ENCODE measurements at regions of chr7 and their contacts with region 1.

Region 1: DNA sequence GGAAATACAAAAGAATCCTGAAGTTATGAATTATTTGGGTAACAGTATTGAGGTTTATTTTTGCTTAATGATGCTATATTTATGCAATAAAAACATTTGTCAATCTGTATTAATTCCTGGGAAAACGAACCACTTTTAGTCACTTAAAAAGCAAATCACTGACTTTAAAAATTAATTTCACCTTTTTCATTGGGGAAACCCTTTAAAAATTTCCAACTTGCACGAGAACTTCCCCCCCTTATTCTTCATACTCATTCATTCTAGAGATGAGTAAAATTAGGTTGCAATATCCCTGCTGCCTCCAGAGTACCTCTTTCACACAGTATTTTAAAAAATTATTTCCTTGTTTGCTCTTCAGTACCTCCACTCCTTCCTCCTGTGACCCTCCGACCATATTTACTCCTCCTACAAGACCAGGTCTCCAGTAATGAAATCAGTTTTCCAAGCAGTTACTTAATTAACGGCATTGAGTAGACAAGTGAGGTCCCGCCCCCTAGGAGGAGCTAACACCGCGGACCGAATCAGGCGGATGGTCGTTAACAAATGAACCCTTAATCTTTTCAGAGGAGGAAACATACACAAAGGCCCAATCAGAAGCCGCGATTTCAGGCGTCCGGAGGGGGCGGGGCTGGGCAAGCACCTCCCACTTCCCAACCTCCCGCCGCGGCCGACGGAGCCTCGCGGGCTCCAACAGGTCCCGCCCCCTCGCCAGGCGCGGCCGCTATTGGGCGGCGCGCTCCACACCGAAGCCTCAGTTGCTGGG is 465 bp upstream of the TRIM24 start:
- DNase-seq: peak; percentile 98
- H3K4me3 Mint-ChIP-seq: peak overlapping the region; percentile 83
- H3K27ac Mint-ChIP-seq: peak overlapping the region; percentile 82
- H3K4me1 Mint-ChIP-seq: peaks cover 15% of the 10 kb centered on the region
- H3K27me3 Mint-ChIP-seq: no peaks in the 10 kb centered on the region
- CTCF ChIP-seq: no peak

Region 2: DNA sequence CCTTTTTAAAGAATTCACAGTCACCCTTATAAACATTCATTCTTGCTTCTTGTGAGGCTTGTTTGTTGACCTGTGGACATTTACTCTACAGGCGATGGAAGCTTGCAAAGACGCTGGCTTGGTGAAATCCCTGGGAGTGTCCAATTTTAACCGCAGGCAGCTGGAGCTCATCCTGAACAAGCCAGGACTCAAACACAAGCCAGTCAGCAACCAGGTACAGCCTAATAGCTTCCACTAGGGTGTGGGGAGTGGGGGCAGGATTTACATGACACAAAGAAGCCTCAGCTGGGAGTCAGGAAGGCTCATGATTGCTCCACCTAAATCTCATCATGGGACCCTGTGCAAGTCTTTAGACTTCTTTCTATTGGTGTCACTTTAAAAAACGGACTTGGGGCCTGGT is 354.4 kb before region 1 on chr7:
- CTCF ChIA-PET with region 1: no interaction called
- intact Hi-C with region 1: no loop called
- DNase-seq: no peak
- H3K4me3 Mint-ChIP-seq: no peak overlapping the region
- H3K27ac Mint-ChIP-seq: no peak overlapping the region
- H3K4me1 Mint-ChIP-seq: no peaks in the 10 kb centered on the region
- H3K27me3 Mint-ChIP-seq: no peaks in the 10 kb centered on the region
- CTCF ChIP-seq: no peak

Region 3: DNA sequence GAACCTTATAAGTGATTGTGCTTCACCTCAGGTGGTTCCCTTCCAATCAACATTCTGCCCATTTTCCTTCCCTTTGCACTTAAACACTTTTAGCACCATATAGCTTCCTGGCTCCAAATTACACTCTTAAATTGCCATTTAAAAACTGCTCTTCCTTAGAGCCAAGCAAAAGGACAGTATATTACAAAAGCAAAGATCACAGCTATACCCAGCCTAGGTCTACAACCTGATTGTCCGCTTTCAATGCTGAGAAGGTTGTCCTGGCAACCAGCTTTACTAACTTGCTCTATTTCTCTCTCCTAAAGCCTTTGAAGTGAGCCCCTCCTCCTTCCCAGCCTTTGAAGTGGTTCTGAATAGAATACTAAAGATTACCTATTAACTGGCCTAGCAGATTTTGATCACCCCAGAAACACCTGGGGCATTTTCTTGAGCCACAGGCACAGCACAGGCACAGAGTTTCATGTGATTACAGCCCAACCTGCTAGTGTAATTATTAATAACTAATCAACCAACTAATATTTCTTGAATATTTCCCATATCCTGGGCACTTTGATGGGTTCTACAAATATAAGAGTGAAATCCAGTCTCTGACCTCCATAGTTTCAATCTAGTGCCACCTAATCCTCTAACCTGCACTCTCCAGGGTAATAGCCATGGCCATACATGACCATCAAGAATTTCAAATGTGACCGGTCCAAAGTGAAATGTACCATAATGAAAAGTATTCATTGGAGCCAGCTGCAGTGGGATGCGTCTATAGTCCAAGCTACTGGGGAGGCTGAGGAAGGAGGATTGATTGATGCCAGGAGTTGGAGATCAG is 63.1 kb before region 1 on chr7:
- CTCF ChIA-PET with region 1: no interaction called
- intact Hi-C with region 1: loop called (anchors 5 kb)
- DNase-seq: peak; percentile 81
- H3K4me3 Mint-ChIP-seq: peak overlapping the region; percentile 23
- H3K27ac Mint-ChIP-seq: peak overlapping the region; percentile 77
- H3K4me1 Mint-ChIP-seq: peaks cover 18% of the 10 kb centered on the region
- H3K27me3 Mint-ChIP-seq: no peaks in the 10 kb centered on the region
- CTCF ChIP-seq: no peak

Region 4: DNA sequence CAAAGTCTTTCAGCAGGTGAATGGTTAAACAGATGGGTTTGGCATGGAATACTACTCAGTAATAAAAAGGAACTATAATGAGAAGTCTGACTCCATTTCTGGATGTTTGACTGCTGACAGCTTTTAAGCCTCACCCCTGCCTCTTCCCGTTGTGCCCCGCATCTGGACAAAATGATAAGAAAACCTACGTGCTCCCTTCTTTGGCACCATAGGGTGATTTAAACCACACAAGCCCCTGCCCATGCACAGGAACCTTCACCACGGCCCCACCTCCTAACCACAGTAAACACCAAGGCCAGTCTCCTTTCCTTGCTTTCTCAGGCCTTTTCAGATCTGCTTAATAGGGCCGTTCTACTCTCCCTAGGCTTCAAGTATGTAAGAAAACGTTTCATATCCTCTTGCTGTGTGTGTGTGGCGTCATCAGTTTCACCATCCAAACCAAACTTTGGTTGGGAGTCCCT is 724.3 kb after region 1 on chr7:
- CTCF ChIA-PET with region 1: no interaction called
- intact Hi-C with region 1: no loop called
- DNase-seq: no peak
- H3K4me3 Mint-ChIP-seq: no peak overlapping the region
- H3K27ac Mint-ChIP-seq: no peak overlapping the region
- H3K4me1 Mint-ChIP-seq: no peaks in the 10 kb centered on the region
- H3K27me3 Mint-ChIP-seq: no peaks in the 10 kb centered on the region
- CTCF ChIP-seq: no peak

Measured in Calu3 (cell line).